PC-9 (cell line): ENCODE measurements at regions of chr1 and their contacts with region 1.

Region 1: GRCh38 chr1:8026153-8026975 is at the start of gene ERRFI1:
- DNase-seq: peak; percentile 74 to 95
- H3K4me3 ChIP-seq: peak within 1 kb of the TSS; percentile 91
- H3K27ac ChIP-seq: peak within 1 kb of the TSS; percentile 98
- H3K4me1 ChIP-seq: peaks cover 26% of the 10 kb centered on the region
- H3K27me3 ChIP-seq: no peaks in the 10 kb centered on the region
- CTCF ChIP-seq: no peak
- total RNA-seq, gene ERRFI1: 44.9 and 47.8 TPM in 2 replicates

Region 2: DNA sequence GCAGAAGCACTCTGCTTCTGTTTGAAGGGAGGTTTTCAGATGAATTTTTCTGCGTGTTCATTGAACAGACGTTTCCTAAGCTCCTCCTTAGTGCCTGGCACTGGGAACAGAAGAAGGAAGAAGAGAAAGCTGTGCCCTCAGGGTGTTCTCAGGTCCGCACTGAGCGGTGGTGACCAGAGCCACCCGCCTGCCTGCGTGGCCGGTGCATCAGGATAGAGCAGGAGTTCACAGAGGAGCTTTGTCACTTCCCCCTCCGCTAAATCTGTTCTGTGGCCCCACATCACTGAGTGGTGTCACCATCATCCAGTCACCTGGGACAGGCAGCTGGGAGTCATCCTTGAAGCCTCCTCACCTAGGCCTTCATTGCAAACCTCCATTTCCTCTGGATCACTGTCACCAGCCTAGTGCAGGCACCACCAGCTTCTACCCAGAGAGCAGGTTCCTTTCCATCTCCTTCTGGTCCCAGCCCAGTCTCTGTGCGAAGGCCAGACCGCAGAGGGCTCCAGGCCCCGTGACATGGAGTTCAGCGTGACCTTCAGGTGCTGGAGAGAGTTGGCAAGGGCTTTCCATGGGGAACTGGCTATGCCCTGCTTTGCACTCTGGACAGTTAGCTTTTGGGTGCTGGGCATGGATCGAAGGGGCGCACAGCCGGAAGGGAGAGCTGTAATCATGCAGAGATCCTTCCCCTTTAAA is 43.1 kb before region 1 on chr1:
- CTCF ChIA-PET with region 1: no interaction called
- POLR2A ChIA-PET with region 1: no interaction called
- intact Hi-C with region 1: loop called (anchors 1 kb)
- DNase-seq: no peak
- H3K4me3 ChIP-seq: no peak overlapping the region
- H3K27ac ChIP-seq: peak overlapping the region; percentile 46; the same call in 1 of the 2 replicates
- H3K4me1 ChIP-seq: peaks cover 10% of the 10 kb centered on the region
- H3K27me3 ChIP-seq: no peaks in the 10 kb centered on the region
- CTCF ChIP-seq: no peak

Region 3: DNA sequence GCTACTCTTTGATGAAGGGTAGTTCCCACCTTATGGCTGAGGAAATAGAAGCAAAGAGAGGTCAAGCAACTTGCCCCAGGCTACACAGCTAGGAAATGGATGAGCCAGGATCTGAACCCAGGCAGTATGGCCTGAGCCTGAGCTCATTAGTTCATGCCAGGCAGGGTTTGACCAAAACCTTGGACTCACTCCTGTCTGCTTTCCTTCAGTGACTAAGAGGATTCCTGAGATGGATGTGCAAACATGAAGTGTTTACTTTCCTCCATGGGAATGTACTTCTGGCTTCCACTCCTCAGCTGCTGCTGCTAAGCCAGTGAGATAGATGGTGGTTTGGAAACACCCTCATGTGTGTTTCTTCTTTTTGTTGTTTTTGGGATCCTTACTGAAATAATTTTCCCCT is 34.8 kb after region 1 on chr1:
- CTCF ChIA-PET with region 1: no interaction called
- POLR2A ChIA-PET with region 1: interaction called, 5 read pairs
- intact Hi-C with region 1: loop called (anchors 1 kb)
- DNase-seq: peak; percentile 61 to 95
- H3K4me3 ChIP-seq: peak overlapping the region; percentile 47; the same call in 1 of the 2 replicates
- H3K27ac ChIP-seq: peak overlapping the region; percentile 99
- H3K4me1 ChIP-seq: peaks cover 62% of the 10 kb centered on the region
- H3K27me3 ChIP-seq: no peaks in the 10 kb centered on the region
- CTCF ChIP-seq: no peak

Region 4: GRCh38 chr1:8182034-8182761 is 155.8 kb after region 1 on chr1:
- CTCF ChIA-PET with region 1: no interaction called
- POLR2A ChIA-PET with region 1: interaction called, 6 read pairs
- intact Hi-C with region 1: loop called (anchors 1 kb)
- DNase-seq: peak; percentile 64 to 98
- H3K4me3 ChIP-seq: peak overlapping the region; percentile 28; the same call in 1 of the 2 replicates
- H3K27ac ChIP-seq: peak overlapping the region; percentile 100
- H3K4me1 ChIP-seq: peaks cover 40% of the 10 kb centered on the region
- H3K27me3 ChIP-seq: no peaks in the 10 kb centered on the region
- CTCF ChIP-seq: no peak

Region 5: GRCh38 chr1:8259498-8260290 is 233.3 kb after region 1 on chr1:
- CTCF ChIA-PET with region 1: no interaction called
- POLR2A ChIA-PET with region 1: no interaction called
- intact Hi-C with region 1: loop called (anchors 1 kb)
- DNase-seq: peak; percentile 80 to 82
- H3K4me3 ChIP-seq: peak overlapping the region; percentile 49; the same call in 1 of the 2 replicates
- H3K27ac ChIP-seq: peak overlapping the region; percentile 100
- H3K4me1 ChIP-seq: peaks cover 43% of the 10 kb centered on the region
- H3K27me3 ChIP-seq: no peaks in the 10 kb centered on the region
- CTCF ChIP-seq: no peak

Region 6: DNA sequence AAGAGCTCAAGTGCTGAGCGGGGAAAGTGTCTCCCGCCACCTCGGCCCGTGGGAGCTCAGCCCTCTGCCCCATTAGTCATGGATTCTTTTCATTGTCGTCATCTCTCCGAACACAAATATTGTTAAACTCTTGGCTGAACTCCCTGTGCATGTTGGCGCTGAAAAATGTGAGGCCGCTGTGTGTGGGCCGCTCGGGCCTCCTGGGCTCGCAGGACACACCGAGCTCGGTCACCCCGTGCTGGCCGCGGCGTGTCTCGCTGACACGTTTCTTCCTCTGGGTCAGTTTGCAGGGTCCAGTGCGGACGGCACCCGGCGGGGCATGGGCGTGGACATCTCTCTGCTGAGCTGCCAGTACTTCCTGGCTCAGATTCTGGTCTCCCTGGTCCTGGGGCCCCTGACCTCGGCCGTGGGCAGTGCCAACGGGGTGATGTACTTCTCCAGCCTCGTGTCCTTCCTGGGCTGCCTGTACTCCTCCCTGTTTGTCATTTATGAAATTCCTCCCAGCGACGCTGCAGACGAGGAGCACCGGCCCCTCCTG is 317.2 kb after region 1 on chr1:
- CTCF ChIA-PET with region 1: no interaction called
- POLR2A ChIA-PET with region 1: no interaction called
- intact Hi-C with region 1: loop called (anchors 1 kb)
- DNase-seq: peak; percentile 76 to 79
- H3K4me3 ChIP-seq: peak overlapping the region; percentile 45; the same call in 1 of the 2 replicates
- H3K27ac ChIP-seq: peak overlapping the region; percentile 89
- H3K4me1 ChIP-seq: peaks cover 17% of the 10 kb centered on the region
- H3K27me3 ChIP-seq: no peaks in the 10 kb centered on the region
- CTCF ChIP-seq: no peak

Region 7: DNA sequence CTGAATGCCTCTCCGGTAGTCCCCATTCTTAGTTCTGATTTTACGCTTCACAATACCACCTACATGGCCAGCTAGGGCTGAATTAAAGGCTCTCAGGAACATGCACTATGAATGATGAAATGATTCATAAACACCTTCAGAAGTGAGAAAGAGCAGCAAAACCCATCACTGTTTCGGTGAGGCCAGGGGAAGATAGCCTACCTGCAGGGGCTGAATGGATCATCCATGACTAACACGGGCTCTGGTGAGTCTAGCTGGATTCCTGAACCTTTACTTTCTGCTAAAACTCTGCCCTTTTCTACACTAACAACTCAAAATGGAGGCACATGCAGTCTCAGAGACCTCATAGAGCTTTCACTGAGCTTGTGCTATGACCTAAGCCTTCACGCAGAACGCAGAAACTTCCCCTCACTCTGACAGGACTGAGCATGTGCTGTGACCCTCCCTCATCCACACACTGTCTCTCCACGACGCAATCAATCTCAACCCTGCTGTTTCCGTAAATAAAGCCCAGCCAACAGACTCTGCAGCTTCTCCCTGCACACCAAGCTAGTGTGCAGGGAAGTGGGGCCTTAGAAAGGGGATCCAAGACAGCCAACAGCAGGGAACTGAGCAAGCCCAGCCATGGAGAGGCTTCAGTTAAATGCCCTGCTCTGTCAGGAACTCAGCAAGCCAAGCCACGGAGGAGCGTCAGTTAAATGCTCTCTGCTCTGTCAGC is 499.4 kb after region 1 on chr1:
- CTCF ChIA-PET with region 1: no interaction called
- POLR2A ChIA-PET with region 1: interaction called, 11 read pairs
- intact Hi-C with region 1: no loop called
- DNase-seq: peak; percentile 63 to 67
- H3K4me3 ChIP-seq: peak overlapping the region; percentile 55
- H3K27ac ChIP-seq: peak overlapping the region; percentile 65
- H3K4me1 ChIP-seq: peaks cover 18% of the 10 kb centered on the region
- H3K27me3 ChIP-seq: no peaks in the 10 kb centered on the region
- CTCF ChIP-seq: no peak